Mucosa of descending colon (tissue), 3 donors: ENCODE measurements at regions of chr9 and their contacts with region 1.

Region 1: DNA sequence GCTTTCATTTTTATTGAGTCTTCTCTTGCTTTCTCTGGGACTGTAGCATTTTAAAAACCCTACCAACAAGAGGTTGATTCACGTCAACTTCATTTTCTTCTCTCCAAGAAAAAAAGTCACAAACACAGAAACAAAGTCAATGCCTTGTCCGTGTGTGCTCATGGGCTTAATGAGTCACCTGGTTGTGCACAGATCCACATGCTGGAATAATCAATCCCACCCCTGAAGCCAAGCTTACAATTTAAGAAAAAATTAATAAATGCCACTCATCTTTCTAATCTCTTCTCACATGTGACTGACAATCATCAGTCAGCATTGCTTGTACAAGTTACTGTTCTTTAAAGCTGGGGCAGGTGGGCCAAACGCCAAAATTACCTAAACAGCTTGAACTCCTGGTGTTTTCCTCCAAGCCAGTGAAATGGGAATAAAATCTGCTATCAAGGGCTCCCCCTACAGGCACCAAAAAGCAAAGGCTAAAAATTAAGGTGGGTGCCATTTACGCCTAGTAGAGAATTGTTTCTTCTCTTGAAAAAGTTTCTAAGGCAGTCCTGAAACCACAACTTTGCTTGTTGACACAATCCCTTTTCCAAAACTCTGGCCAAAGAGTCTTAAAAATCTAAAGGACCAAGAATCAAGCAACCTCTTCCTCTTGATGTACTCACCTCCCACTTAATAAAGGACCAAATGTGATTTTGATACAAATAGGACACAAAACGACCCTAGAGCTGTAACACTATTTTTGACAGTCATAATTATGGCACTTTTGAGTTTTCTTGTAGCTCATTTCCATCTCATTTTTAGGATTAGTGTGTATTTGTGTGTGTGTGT is 21.3 kb downstream of the TRMO start:
- DNase-seq: peak in 1 of 3 donors; percentile 47
- ATAC-seq: peak; percentile 55
- H3K4me3 ChIP-seq: no peak overlapping the region
- H3K4me1 ChIP-seq: no peaks in the 10 kb centered on the region
- CTCF ChIP-seq: peak; percentile 32

Region 2: DNA sequence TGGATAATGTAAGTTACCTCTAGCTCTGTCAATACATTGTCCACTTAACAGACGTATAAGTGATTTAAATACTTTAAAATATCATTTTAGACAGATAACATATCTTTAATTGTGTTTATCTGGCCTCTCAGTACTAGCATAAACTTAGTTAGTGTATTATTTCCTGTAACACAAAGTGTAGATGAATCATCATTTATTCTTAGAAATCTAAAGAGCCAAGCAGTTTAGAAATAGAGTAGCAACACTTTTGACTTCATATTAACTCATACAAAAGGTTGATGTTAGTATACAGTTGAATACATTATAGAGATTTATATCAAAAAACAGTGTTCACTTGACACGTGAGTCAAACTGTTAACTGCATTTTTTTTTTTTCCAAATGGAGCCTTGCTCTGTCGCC is 249.3 kb before region 1 on chr9:
- intact Hi-C with region 1: no loop called
- DNase-seq: no peak
- ATAC-seq: no peak
- H3K4me3 ChIP-seq: no peak overlapping the region
- H3K4me1 ChIP-seq: no peaks in the 10 kb centered on the region
- CTCF ChIP-seq: no peak

Region 3: DNA sequence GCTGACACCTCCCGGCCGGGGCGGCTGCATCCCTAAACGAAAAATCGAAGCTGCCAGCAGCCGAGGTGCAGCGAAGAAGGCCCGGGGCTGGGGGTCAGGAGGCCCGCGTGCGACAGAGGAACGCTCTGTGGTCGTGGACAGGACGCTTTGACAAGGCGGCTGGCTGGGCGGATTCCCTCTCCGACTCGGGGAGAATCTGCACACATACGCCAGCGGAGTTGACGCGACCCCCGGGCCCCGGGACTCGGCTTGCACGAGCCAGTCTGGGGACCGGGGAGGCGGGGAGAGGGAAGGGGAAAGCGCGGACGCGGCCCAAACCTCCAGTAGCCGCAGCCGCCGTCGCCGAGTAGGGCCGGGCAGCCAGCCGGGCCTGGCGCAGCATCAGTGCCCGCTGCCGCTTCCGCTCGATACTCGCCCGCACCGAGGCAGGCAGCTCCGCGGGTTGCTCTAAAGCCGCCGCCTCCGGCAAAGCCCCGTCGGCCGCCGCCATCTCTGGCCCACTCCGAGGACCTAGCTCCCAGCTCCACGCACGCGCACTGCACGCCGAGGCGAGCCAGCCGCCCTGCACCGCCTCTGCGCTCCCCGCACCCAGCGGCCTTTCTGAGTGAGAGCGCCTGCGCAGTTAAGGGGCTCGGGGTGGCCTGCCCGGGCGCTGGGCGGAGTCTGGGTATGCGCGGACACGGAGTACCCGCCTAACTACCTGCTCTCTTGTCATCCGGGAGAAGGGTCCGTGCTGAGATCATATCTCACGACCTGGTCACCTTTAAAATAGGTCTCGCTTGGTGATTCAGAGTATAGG is 203.9 kb before region 1 on chr9 and contains the start of gene XPA:
- intact Hi-C with region 1: no loop called
- DNase-seq: peak; percentile 96 to 99 (median 98)
- ATAC-seq: peak; percentile 99
- H3K4me3 ChIP-seq: peak within 1 kb of the TSS; percentile 60
- H3K4me1 ChIP-seq: peaks cover 10% of the 10 kb centered on the region
- CTCF ChIP-seq: no peak
- total RNA-seq, gene XPA: 10.8 to 24.0 (median 14.6) TPM

Region 4: DNA sequence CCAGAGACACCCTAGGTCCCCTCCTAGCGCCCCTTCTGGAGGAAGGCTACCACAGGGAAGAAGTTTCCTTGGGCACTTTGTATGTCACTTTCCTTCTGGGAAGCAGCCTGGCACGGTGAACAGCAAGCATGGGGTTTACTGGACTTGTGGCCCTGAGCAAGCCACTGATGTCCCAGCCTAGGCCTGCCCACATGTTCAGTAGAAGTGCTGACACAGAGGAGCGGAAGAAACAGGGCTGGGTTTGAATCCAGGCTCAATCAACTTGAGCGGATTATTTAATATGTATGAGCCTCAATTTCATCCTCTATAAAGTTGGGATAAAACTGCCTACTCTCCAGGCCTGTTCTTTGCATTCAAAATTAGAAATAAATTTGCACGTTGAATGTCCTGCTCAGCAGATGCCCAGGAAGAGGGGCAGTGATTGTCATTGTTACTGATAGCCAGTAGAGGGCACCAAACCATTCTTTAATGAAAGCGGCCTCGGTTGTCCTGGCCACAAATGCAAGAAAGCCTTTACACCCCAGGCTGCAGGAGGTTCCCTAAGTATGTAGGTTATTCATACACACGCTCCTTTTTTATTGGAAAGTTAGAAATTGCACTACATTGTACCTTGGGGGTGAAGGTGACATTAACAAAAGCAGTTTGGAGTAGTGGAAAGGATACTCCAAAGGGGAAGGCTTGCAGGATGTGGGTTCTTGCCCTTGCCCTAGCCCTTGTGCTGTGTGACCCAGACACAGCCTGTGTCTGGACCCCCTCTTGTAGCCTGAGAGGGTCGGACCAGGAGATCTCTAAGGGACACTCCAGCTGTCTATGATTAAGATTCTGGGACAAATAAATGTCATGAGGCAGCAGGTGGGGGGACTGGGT is 190.4 kb before region 1 on chr9:
- intact Hi-C with region 1: loop called (anchors 10 kb)
- DNase-seq: peak in 1 of 3 donors; percentile 55
- ATAC-seq: peak; percentile 92
- H3K4me3 ChIP-seq: no peak overlapping the region
- H3K4me1 ChIP-seq: no peaks in the 10 kb centered on the region
- CTCF ChIP-seq: peak; percentile 82

Region 5: GRCh38 chr9:98158071-98158831 is 257.3 kb after region 1 on chr9:
- intact Hi-C with region 1: no loop called
- DNase-seq: peak in 2 of 3 donors; percentile 74 to 83
- ATAC-seq: peak; percentile 95
- H3K4me3 ChIP-seq: no peak overlapping the region
- H3K4me1 ChIP-seq: peaks cover 6% of the 10 kb centered on the region
- CTCF ChIP-seq: no peak